ENCODE measurements at regions of chr3 and their contacts with region 1.

Region 1: GRCh38 chr3:112175646-112176045 is 42.6 kb upstream of the GCSAM start:
- DNase-seq: no peak
- ATAC-seq: no peak
- H3K4me3 ChIP-seq: no peak overlapping the region
- H3K27ac ChIP-seq: no peak overlapping the region
- H3K4me1 ChIP-seq: no peaks in the 10 kb centered on the region
- H3K27me3 ChIP-seq: no peaks in the 10 kb centered on the region
- CTCF ChIP-seq: no peak

Region 2: DNA sequence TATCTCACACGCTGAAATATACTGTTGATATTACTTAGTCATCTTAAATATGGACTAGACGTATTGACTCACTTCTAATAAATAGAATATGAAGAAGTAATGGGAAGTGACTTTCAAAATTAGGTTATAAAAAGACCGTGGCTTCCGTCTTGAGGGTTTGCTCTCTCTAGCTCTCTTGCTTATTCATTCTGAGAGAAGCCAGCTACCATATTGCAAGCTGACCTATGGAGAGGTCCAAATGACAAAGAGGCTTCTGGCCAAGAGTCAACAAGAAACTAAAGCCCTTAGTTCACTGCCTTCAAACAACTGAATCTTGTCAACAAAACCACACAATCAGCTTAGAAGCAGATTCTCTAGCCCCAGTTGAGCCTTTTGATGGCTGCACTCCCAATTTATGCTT is 72.3 kb after region 1 on chr3:
- CTCF ChIA-PET with region 1: no interaction called
- POLR2A ChIA-PET with region 1: no interaction called
- in situ Hi-C with region 1: no loop called
- intact Hi-C with region 1: loop called (anchors 10 kb)
- DNase-seq: no peak
- ATAC-seq: no peak
- H3K4me3 ChIP-seq: no peak overlapping the region
- H3K27ac ChIP-seq: no peak overlapping the region
- H3K4me1 ChIP-seq: no peaks in the 10 kb centered on the region
- H3K27me3 ChIP-seq: no peaks in the 10 kb centered on the region
- CTCF ChIP-seq: no peak